GM13977 (cell line): ENCODE measurements at regions of chr3 and their contacts with region 1.

Region 1: GRCh38 chr3:32733631-32734229 is 48.7 kb downstream of the CNOT10 start:
- DNase-seq: peak; percentile 36
- CTCF ChIP-seq: peak; percentile 60

Region 2: GRCh38 chr3:32934150-32934742 is 200.5 kb after region 1 on chr3:
- in situ Hi-C with region 1: loop called (anchors 10 kb)
- DNase-seq: no peak
- CTCF ChIP-seq: peak; percentile 73